Left colon (tissue), 2 donors: ENCODE measurements at regions of chr22 and their contacts with region 1.

Region 1: GRCh38 chr22:45268958-45269844 is 15.5 kb upstream of the UPK3A start:
- DNase-seq: peak; percentile 67 to 91
- ATAC-seq: peak; percentile 72

Region 2: DNA sequence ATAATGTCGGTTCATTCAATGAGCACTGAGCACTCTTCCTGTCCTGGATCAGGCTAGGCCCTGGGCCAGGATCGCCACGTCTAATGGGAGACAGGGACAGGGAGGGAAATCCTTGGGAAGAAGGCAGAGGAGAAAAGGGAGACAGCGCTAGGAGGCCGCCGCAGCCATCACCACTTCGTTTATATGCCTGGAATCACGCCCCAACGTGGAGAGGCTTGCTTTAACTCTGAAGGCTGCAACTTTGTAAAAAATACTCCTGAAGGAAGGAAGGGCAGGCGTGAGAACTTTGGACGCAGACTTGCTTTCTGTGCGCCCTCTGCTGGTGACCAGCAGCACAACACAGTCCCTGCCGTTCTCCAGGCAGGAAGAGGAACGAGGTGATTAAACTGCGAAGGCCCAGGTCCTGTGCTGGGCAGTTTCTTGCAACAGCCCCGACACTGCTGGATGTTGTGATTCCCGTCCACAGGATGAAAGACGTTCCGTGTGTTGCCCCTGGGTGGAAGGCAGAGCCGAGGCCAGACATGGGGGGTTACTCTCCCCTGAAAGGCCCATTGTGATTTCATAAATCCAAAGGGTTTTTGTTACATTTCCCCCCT is 166.4 kb after region 1 on chr22:
- intact Hi-C with region 1: loop called (anchors 5 kb)
- DNase-seq: peak; percentile 84 to 91
- ATAC-seq: peak; percentile 99

Region 3: DNA sequence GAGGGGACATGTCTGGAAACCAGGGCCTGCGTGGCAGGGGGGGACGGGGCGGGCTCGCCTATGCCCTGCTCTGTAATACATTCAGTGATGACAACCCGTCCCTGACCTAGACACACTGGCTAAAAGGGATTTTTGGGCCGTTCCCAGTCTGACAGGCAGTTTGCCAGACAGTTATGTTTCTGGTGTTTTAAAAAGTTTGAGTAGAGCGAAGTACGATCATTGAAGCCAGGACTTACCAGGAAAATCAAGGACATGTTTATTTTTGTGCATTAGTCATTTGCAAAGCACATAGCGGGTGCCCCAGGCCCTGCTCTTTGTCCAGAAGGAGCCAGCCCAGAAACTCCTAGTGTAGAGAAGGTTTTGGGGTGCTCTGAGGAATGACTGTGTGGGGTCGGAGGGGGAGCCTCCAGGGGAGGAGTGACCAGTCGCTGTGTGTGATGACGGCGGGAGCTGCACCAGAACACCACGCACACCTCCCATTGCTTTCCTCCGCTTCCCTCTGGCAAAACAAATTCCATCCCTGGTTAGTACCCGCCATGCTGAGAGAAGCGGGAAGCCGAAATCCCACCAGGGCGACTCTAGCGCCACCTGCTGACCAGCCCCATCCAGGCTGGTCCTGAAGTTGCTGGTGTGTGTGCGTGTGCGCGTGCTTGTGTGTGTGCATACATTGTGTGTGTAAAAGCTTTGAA is 284.3 kb after region 1 on chr22:
- intact Hi-C with region 1: loop called in 1 of 2 experiments (anchors 10 kb)
- DNase-seq: peak; percentile 53 to 77
- ATAC-seq: peak; percentile 79